GM23248 (cell line): ENCODE measurements at regions of chr9 and their contacts with region 1.

Region 1: GRCh38 chr9:109903515-109904138 is 123.6 kb downstream of the PALM2AKAP2 start:
- DNase-seq: peak; percentile 89
- H3K4me3 ChIP-seq: no peak overlapping the region
- H3K27ac ChIP-seq: no peak overlapping the region
- H3K4me1 ChIP-seq: peaks cover 38% of the 10 kb centered on the region
- H3K27me3 ChIP-seq: no peaks in the 10 kb centered on the region

Region 2: GRCh38 chr9:109369285-109369684 is 534.3 kb before region 1 on chr9:
- in situ Hi-C with region 1: no loop called
- DNase-seq: no peak
- H3K4me3 ChIP-seq: no peak overlapping the region
- H3K27ac ChIP-seq: no peak overlapping the region
- H3K4me1 ChIP-seq: no peaks in the 10 kb centered on the region
- H3K27me3 ChIP-seq: peaks cover 18% of the 10 kb centered on the region; the same call in 1 of the 2 replicates

Region 3: DNA sequence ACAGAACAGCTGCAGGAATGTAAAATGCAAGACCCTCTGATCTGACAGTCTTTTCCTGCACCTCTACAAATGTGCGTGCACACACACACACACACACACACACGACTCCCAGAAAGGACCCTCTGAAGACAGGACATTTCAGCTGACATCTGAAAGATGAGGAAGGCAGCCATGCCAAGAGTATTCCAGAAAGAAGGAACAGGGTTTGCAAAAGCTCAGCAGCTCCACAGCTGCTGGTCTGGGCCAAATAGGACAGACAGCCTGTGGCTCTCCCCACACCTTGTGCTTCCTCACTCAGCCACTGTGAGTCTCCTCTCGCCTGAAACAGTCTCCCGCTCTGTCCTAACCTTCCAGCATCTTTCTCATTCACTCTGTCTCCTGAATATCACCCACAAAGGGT is 65.4 kb after region 1 on chr9:
- in situ Hi-C with region 1: loop called (anchors 10 kb)
- DNase-seq: peak; percentile 17
- H3K4me3 ChIP-seq: no peak overlapping the region
- H3K27ac ChIP-seq: no peak overlapping the region
- H3K4me1 ChIP-seq: no peaks in the 10 kb centered on the region
- H3K27me3 ChIP-seq: no peaks in the 10 kb centered on the region

Region 4: GRCh38 chr9:110058304-110058953 is 154.8 kb after region 1 on chr9:
- in situ Hi-C with region 1: loop called (anchors 10 kb)
- DNase-seq: no peak
- H3K4me3 ChIP-seq: no peak overlapping the region
- H3K27ac ChIP-seq: no peak overlapping the region
- H3K4me1 ChIP-seq: no peaks in the 10 kb centered on the region
- H3K27me3 ChIP-seq: no peaks in the 10 kb centered on the region

Region 5: GRCh38 chr9:110152704-110153374 is 249.2 kb after region 1 on chr9:
- in situ Hi-C with region 1: loop called (anchors 10 kb)
- DNase-seq: peak; percentile 66
- H3K4me3 ChIP-seq: no peak overlapping the region
- H3K27ac ChIP-seq: no peak overlapping the region; the same call in 1 of the 2 replicates
- H3K4me1 ChIP-seq: peaks cover 66% of the 10 kb centered on the region
- H3K27me3 ChIP-seq: no peaks in the 10 kb centered on the region